ENCODE measurements at regions of chr4 and their contacts with region 1.

Region 1: DNA sequence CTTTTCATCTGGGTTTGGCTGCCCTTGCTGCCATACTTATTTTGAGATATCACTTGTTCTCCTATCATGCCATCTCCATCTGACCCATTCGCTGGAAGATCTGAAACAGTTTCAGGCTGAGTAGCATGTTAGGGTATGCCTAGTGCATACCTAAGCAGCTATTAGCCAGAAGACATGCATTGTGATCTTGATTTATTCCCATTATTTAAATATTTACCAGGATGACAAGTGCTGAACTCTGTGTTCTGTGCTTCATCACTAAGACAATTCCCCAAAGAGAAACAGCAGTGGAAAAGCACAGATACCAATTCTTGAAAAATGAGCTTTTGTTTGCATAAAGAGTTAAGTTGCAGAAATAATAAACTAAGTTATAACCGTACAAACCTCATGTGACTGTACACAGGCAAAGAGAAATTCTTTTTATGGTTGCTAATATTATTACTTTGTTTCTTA is 271.0 kb upstream of the ARSJ start:
- DNase-seq: no peak
- ATAC-seq: no peak
- H3K4me3 ChIP-seq: no peak overlapping the region
- H3K27ac ChIP-seq: no peak overlapping the region
- H3K4me1 ChIP-seq: no peaks in the 10 kb centered on the region
- H3K27me3 ChIP-seq: no peaks in the 10 kb centered on the region
- CTCF ChIP-seq: no peak
- POLR2A ChIP-seq: no peak

Region 2: GRCh38 chr4:114263233-114263632 is 12.8 kb after region 1 on chr4:
- intact Hi-C with region 1: loop called in 1 of 10 experiments (anchors 1 kb)
- DNase-seq: no peak
- ATAC-seq: no peak
- H3K4me3 ChIP-seq: no peak overlapping the region
- H3K27ac ChIP-seq: no peak overlapping the region
- H3K4me1 ChIP-seq: no peaks in the 10 kb centered on the region
- H3K27me3 ChIP-seq: no peaks in the 10 kb centered on the region
- CTCF ChIP-seq: no peak
- POLR2A ChIP-seq: no peak

Region 3: DNA sequence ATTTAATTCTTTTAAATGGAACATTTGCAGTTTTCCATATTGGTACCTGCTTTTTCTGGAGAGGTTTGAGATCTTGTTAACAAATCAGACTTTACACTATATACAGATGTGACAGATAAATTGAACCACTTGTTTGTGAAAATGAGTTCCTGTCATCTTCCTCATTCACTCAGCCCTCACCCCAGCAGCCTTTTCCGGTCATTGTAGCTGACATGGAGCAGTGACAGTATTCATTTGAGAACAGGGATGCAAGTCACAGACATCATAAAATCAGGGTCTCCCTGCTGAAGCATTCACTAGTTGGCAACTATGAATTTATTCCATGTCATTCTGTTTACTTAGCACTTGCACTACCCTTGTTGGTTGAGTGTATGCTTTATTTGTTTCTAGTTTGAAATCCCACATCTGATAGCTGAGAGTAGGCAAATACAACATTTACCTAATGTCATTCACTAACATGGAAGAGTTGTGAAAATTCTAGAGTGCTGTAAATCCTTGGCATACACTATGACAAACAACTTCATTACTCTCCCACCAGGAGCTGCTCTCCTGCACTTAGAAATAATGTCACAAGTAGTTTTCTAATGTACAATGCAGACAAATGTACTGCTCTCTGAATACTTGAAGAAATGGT is 427.0 kb after region 1 on chr4:
- intact Hi-C with region 1: no loop called
- DNase-seq: no peak
- ATAC-seq: no peak
- H3K4me3 ChIP-seq: no peak overlapping the region
- H3K27ac ChIP-seq: no peak overlapping the region
- H3K4me1 ChIP-seq: no peaks in the 10 kb centered on the region
- H3K27me3 ChIP-seq: peaks cover 0 to 3% (median 0%) of the 10 kb centered on the region in 9 donors
- CTCF ChIP-seq: no peak
- POLR2A ChIP-seq: no peak